ENCODE measurements at regions of chr1 and their contacts with region 1.

Region 1: GRCh38 chr1:147242439-147243227 is at the start of gene CHD1L:
- DNase-seq: peak; percentile 96
- ATAC-seq: peak; percentile 93
- H3K4me3 Mint-ChIP-seq: peak within 1 kb of the TSS; percentile 97
- H3K27ac Mint-ChIP-seq: peak within 1 kb of the TSS; percentile 87
- H3K4me1 Mint-ChIP-seq: peaks cover 39% of the 10 kb centered on the region
- H3K27me3 Mint-ChIP-seq: peaks cover 15% of the 10 kb centered on the region
- total RNA-seq, gene CHD1L: 82.2 to 83.7 TPM

Region 2: GRCh38 chr1:147167361-147167760 is 75.3 kb before region 1 on chr1:
- CTCF ChIA-PET with region 1: interaction called, 42 read pairs
- DNase-seq: no peak
- ATAC-seq: no peak
- H3K4me3 Mint-ChIP-seq: no peak overlapping the region
- H3K27ac Mint-ChIP-seq: no peak overlapping the region
- H3K4me1 Mint-ChIP-seq: peaks cover 16% of the 10 kb centered on the region
- H3K27me3 Mint-ChIP-seq: no peaks in the 10 kb centered on the region

Region 3: GRCh38 chr1:147172168-147172992 is 70.3 kb before region 1 on chr1 and contains the start of gene PRKAB2:
- CTCF ChIA-PET with region 1: interaction called, 42 read pairs
- DNase-seq: peak; percentile 95
- ATAC-seq: peak; percentile 85
- H3K4me3 Mint-ChIP-seq: peak within 1 kb of the TSS; percentile 96
- H3K27ac Mint-ChIP-seq: peak within 1 kb of the TSS; percentile 96
- H3K4me1 Mint-ChIP-seq: peaks cover 35% of the 10 kb centered on the region
- H3K27me3 Mint-ChIP-seq: peaks cover 3% of the 10 kb centered on the region
- total RNA-seq, gene PRKAB2: 10.2 to 10.8 TPM

Region 4: DNA sequence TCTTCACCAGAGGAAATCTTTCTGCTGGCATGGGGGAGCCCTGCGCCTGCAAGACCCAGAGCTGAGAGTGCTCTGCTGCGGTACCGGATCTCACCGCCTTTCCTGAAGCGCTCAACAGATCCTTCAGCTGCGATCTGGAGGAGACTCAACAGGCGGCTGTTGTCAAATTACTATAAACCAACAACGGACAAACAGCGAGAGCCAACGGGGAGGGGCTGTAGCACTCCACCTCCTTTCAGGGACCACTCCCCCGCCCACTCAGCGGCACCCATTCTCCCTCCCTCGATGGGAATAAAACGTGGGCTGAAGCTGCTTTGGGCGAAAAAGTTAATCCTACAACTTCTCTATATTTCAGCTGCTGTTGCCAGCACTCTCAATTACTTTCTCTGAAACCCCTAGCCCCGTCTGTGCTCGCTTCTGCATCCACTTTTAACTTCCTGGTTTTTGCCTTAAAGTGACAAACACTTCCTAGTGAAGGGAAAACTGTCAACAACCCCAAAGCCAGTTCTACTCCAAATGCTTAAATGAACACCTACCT is 17.4 kb before region 1 on chr1 and contains the start of gene FMO5:
- CTCF ChIA-PET with region 1: interaction called, 39 read pairs
- DNase-seq: peak; percentile 72
- ATAC-seq: peak; percentile 96
- H3K4me3 Mint-ChIP-seq: peak within 1 kb of the TSS; percentile 91
- H3K27ac Mint-ChIP-seq: peak within 1 kb of the TSS; percentile 75
- H3K4me1 Mint-ChIP-seq: peaks cover 14% of the 10 kb centered on the region
- H3K27me3 Mint-ChIP-seq: no peaks in the 10 kb centered on the region
- total RNA-seq, gene FMO5: 0.66 to 0.96 TPM

Measured in activated CD8-positive, alpha-beta memory T cell treated with anti-CD3 and anti-CD28 coated beads, Interleukin-2, amount 10 ng/mL, durations not matched to agents 7 days and 5 days (primary cell).